HCT116 (cell line): ENCODE measurements at regions of chr4 and their contacts with region 1.

Region 1: GRCh38 chr4:137819964-137820383 is 287.7 kb upstream of the PCDH18 start:
- DNase-seq: peak; percentile 50
- ATAC-seq: peak; percentile 99
- H3K4me3 ChIP-seq: no peak overlapping the region
- H3K27ac ChIP-seq: no peak overlapping the region
- H3K4me1 ChIP-seq: no peaks in the 10 kb centered on the region
- H3K27me3 ChIP-seq: no peaks in the 10 kb centered on the region
- CTCF ChIP-seq: peak; percentile 67 to 78 (median 72)
- POLR2A ChIP-seq: no peak
- RAD21 ChIP-seq: peak; percentile 92

Region 2: DNA sequence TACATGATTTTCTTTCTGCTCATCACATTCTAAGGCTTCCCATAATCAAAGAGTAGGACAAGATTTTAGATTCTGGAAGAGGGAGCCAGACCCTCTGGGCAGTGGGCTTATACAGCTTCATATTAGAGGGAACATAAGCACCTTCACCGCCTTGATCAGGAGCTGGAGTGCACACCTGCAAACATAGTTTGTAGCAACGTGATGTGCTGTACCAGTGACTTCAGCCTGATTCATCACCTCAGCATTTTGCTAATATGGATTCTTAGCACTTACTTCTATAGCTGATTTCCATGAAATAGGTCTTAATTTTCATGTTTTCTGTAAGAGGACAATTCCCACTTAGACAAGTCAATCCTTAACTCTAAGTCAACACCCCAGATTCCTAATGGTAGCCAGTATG is 324.4 kb before region 1 on chr4:
- CTCF ChIA-PET with region 1: no interaction called
- POLR2A ChIA-PET with region 1: no interaction called
- RAD21 ChIA-PET with region 1: no interaction called
- intact Hi-C with region 1: no loop called
- DNase-seq: no peak
- ATAC-seq: no peak
- H3K4me3 ChIP-seq: no peak overlapping the region
- H3K27ac ChIP-seq: no peak overlapping the region
- H3K4me1 ChIP-seq: no peaks in the 10 kb centered on the region
- H3K27me3 ChIP-seq: no peaks in the 10 kb centered on the region
- CTCF ChIP-seq: no peak
- POLR2A ChIP-seq: no peak
- RAD21 ChIP-seq: no peak

Region 3: GRCh38 chr4:137861682-137862081 is 41.7 kb after region 1 on chr4:
- CTCF ChIA-PET with region 1: interaction called, 5 read pairs
- POLR2A ChIA-PET with region 1: no interaction called
- RAD21 ChIA-PET with region 1: no interaction called
- intact Hi-C with region 1: loop called (anchors 1 kb)
- DNase-seq: no peak
- ATAC-seq: no peak
- H3K4me3 ChIP-seq: no peak overlapping the region
- H3K27ac ChIP-seq: no peak overlapping the region
- H3K4me1 ChIP-seq: no peaks in the 10 kb centered on the region
- H3K27me3 ChIP-seq: no peaks in the 10 kb centered on the region
- CTCF ChIP-seq: peak; percentile 29 to 37 (median 37); a peak in 4 of 6 replicates
- POLR2A ChIP-seq: no peak
- RAD21 ChIP-seq: peak; percentile 50

Region 4: GRCh38 chr4:138182838-138183426 is 363.0 kb after region 1 on chr4:
- CTCF ChIA-PET with region 1: interaction called, 8 read pairs
- POLR2A ChIA-PET with region 1: interaction called, 3 read pairs
- RAD21 ChIA-PET with region 1: interaction called in 1 of 2 experiments, 5 read pairs
- intact Hi-C with region 1: loop called (anchors 2 kb)
- DNase-seq: peak; percentile 45
- ATAC-seq: no peak
- H3K4me3 ChIP-seq: no peak overlapping the region
- H3K27ac ChIP-seq: no peak overlapping the region
- H3K4me1 ChIP-seq: no peaks in the 10 kb centered on the region
- H3K27me3 ChIP-seq: no peaks in the 10 kb centered on the region
- CTCF ChIP-seq: peak; percentile 45 to 81 (median 59)
- POLR2A ChIP-seq: no peak
- RAD21 ChIP-seq: peak; percentile 73

Region 5: DNA sequence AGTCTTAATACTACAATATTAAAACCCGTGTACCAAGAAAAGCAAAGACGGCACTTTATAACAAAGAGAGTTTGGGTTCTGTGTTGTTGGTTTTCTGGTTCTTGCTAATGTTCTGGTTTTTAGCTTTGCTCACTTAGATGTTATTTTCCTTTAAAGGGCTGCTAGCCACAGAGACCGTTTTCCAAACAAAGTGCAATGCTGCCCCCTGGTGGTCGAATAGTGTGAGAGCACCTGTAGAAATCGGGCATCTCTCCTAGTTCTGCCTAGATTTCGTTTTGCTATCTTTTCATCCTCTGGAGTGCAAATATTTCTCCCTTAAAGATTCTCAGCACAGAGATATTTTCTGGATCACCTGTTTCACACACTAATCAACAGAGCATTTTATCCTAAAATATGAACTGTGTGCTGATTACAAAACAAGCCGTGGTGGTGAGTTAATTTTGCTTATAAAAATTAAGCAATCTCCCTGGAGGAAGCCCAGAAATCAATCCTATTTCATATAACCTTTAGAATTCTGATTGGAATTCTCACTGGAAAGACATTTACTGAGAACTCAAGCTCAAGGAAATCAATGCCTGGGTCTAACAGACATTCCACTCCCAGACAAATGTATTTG is 861.1 kb after region 1 on chr4:
- CTCF ChIA-PET with region 1: interaction called, 21 read pairs
- POLR2A ChIA-PET with region 1: no interaction called
- RAD21 ChIA-PET with region 1: interaction called in 1 of 2 experiments, 6 read pairs
- intact Hi-C with region 1: loop called (anchors 1 kb)
- DNase-seq: peak; percentile 57
- ATAC-seq: peak; percentile 84
- H3K4me3 ChIP-seq: no peak overlapping the region
- H3K27ac ChIP-seq: no peak overlapping the region
- H3K4me1 ChIP-seq: no peaks in the 10 kb centered on the region
- H3K27me3 ChIP-seq: no peaks in the 10 kb centered on the region
- CTCF ChIP-seq: peak; percentile 72 to 96 (median 74); a peak in 5 of 6 replicates
- POLR2A ChIP-seq: no peak
- RAD21 ChIP-seq: peak; percentile 91

Region 6: GRCh38 chr4:138919094-138919936 is 1099.3 kb after region 1 on chr4:
- CTCF ChIA-PET with region 1: no interaction called
- POLR2A ChIA-PET with region 1: no interaction called
- RAD21 ChIA-PET with region 1: no interaction called
- intact Hi-C with region 1: loop called (anchors 5 kb)
- DNase-seq: peak; percentile 66
- ATAC-seq: peak; percentile 100
- H3K4me3 ChIP-seq: peak overlapping the region; percentile 18 to 28; a peak in 3 of 4 replicates
- H3K27ac ChIP-seq: no peak overlapping the region
- H3K4me1 ChIP-seq: peaks cover 2 to 9% of the 10 kb centered on the region in 2 experiments; a peak in 2 of 4 replicates
- H3K27me3 ChIP-seq: no peaks in the 10 kb centered on the region
- CTCF ChIP-seq: peak; percentile 61 to 78 (median 76)
- POLR2A ChIP-seq: no peak
- RAD21 ChIP-seq: peak; percentile 88